ENCODE measurements at regions of chr1 and their contacts with region 1.

Region 1: GRCh38 chr1:145804235-145805045 is 19.5 kb downstream of the RNF115 start:
- DNase-seq: no peak
- ATAC-seq: no peak
- H3K4me3 Mint-ChIP-seq: no peak overlapping the region
- H3K27ac Mint-ChIP-seq: no peak overlapping the region
- H3K4me1 Mint-ChIP-seq: peaks cover 37% of the 10 kb centered on the region
- H3K27me3 Mint-ChIP-seq: no peaks in the 10 kb centered on the region
- CTCF ChIP-seq: no peak

Region 2: DNA sequence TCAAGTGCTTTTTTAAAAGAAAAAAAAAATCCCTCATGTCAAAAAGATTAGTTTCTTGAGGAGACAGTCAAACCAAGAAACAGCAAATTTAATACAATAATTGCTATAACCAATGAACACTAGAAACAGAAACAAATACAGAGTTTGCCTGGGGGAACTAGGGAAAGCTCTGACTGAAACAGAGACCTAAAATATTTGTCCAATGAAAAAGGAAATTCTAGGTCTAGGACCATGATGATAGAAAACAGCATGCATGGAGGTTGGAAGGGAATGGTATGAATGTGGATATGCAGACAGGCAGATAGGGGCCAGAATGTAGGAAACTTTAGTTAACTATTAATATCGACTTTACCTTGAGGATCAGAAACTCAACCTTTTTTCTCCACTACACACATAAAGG is 12.0 kb before region 1 on chr1:
- CTCF ChIA-PET with region 1: no interaction called
- POLR2A ChIA-PET with region 1: interaction called, 3 read pairs
- intact Hi-C with region 1: loop called (anchors 2 kb)
- DNase-seq: no peak
- ATAC-seq: no peak
- H3K4me3 Mint-ChIP-seq: no peak overlapping the region
- H3K27ac Mint-ChIP-seq: no peak overlapping the region
- H3K4me1 Mint-ChIP-seq: no peaks in the 10 kb centered on the region
- H3K27me3 Mint-ChIP-seq: no peaks in the 10 kb centered on the region
- CTCF ChIP-seq: no peak